CD8-positive, alpha-beta T cell (primary cell): ENCODE measurements at regions of chr6 and their contacts with region 1.

Region 1: GRCh38 chr6:142155895-142156757 is 9.1 kb downstream of the VTA1 start:
- DNase-seq: peak in 2 of 9 experiments; percentile 19 to 44
- ATAC-seq: peak; percentile 76
- H3K4me3 ChIP-seq: no peak overlapping the region
- H3K4me3 Mint-ChIP-seq: no peak overlapping the region
- H3K27ac ChIP-seq: no peak overlapping the region
- H3K27ac Mint-ChIP-seq: peak overlapping the region; percentile 39
- H3K4me1 ChIP-seq: peaks cover 8% of the 10 kb centered on the region
- H3K4me1 Mint-ChIP-seq: peaks cover 69% of the 10 kb centered on the region
- H3K27me3 ChIP-seq: no peaks in the 10 kb centered on the region
- H3K27me3 Mint-ChIP-seq: no peaks in the 10 kb centered on the region
- CTCF ChIP-seq: peak; percentile 83

Region 2: DNA sequence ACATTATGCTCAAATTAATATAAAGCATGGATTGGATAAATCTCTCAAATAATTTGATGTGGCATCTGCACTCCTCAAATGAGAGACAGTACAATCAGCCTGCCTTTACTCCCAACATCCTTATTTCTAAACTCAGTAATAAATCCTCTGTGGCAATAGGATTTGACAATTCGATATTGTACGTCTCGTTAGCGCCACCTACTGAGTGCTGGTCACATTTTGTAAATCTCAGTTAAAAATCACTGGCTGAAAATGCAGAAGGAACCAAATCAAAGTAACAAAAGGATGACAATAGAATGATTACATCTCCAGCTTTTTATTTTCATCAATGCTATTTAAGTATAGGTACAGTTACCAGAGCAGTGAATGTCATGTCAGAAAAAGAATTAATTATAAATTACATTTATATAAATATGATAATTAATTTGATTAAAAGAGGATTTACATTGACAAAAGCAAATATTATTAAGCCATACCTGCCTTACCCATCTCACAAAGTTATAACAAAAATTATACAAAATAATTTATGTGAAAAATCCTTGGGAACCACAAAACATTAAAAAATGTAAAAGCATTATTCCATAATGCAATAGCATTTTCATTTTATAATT is 43.6 kb before region 1 on chr6:
- CTCF ChIA-PET with region 1: no interaction called
- POLR2A ChIA-PET with region 1: no interaction called
- intact Hi-C with region 1: no loop called
- DNase-seq: peak; percentile 19 to 79 (median 68)
- ATAC-seq: peak; percentile 44
- H3K4me3 ChIP-seq: no peak overlapping the region
- H3K4me3 Mint-ChIP-seq: no peak overlapping the region
- H3K27ac ChIP-seq: no peak overlapping the region
- H3K27ac Mint-ChIP-seq: no peak overlapping the region
- H3K4me1 ChIP-seq: no peaks in the 10 kb centered on the region
- H3K4me1 Mint-ChIP-seq: no peaks in the 10 kb centered on the region
- H3K27me3 ChIP-seq: no peaks in the 10 kb centered on the region
- H3K27me3 Mint-ChIP-seq: peaks cover 9% of the 10 kb centered on the region
- CTCF ChIP-seq: peak; percentile 85

Region 3: DNA sequence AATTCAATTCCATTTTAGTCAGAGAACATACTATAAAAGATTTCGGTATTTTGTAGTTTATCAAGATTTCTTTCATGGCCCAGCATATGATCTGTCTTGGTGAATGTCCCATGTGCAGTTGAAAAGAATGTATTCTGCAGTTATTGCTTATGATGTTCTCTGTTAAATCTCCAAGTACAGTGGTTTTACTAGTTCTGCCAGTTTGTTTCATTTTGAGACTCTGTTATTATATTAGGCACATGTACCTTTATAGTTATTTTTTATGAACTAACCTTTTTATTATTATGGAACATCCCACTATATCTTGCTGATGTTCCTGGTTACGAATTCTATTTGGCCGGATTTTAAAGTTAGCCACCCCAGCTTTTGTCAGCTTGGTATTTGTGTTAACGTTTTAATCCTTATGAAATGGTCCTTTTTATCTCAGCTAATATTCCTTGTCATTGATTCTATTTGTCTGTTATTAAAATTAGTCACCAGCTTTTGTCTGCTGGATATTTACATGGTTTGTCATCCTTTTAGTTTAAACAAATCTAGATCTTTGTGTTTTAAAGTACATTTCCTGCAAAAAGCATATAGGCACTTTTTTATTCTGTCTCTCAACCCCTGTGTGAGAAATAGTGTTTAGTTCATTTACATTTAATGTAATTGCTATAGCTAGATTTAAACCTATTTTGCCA is 39.9 kb after region 1 on chr6:
- CTCF ChIA-PET with region 1: interaction called, 13 read pairs
- POLR2A ChIA-PET with region 1: no interaction called
- intact Hi-C with region 1: no loop called
- DNase-seq: no peak
- ATAC-seq: no peak
- H3K4me3 ChIP-seq: no peak overlapping the region
- H3K4me3 Mint-ChIP-seq: no peak overlapping the region
- H3K27ac ChIP-seq: no peak overlapping the region
- H3K27ac Mint-ChIP-seq: peak overlapping the region; percentile 41
- H3K4me1 ChIP-seq: peaks cover 8% of the 10 kb centered on the region
- H3K4me1 Mint-ChIP-seq: peaks cover 52% of the 10 kb centered on the region
- H3K27me3 ChIP-seq: no peaks in the 10 kb centered on the region
- H3K27me3 Mint-ChIP-seq: no peaks in the 10 kb centered on the region
- CTCF ChIP-seq: no peak

Region 4: GRCh38 chr6:142361782-142362750 is 205.9 kb after region 1 on chr6:
- CTCF ChIA-PET with region 1: no interaction called
- POLR2A ChIA-PET with region 1: no interaction called
- intact Hi-C with region 1: no loop called
- DNase-seq: no peak
- ATAC-seq: no peak
- H3K4me3 ChIP-seq: no peak overlapping the region
- H3K4me3 Mint-ChIP-seq: no peak overlapping the region
- H3K27ac ChIP-seq: no peak overlapping the region
- H3K27ac Mint-ChIP-seq: no peak overlapping the region
- H3K4me1 ChIP-seq: no peaks in the 10 kb centered on the region
- H3K4me1 Mint-ChIP-seq: peaks cover 2% of the 10 kb centered on the region
- H3K27me3 ChIP-seq: no peaks in the 10 kb centered on the region
- H3K27me3 Mint-ChIP-seq: peaks cover 3% of the 10 kb centered on the region
- CTCF ChIP-seq: no peak

Region 5: DNA sequence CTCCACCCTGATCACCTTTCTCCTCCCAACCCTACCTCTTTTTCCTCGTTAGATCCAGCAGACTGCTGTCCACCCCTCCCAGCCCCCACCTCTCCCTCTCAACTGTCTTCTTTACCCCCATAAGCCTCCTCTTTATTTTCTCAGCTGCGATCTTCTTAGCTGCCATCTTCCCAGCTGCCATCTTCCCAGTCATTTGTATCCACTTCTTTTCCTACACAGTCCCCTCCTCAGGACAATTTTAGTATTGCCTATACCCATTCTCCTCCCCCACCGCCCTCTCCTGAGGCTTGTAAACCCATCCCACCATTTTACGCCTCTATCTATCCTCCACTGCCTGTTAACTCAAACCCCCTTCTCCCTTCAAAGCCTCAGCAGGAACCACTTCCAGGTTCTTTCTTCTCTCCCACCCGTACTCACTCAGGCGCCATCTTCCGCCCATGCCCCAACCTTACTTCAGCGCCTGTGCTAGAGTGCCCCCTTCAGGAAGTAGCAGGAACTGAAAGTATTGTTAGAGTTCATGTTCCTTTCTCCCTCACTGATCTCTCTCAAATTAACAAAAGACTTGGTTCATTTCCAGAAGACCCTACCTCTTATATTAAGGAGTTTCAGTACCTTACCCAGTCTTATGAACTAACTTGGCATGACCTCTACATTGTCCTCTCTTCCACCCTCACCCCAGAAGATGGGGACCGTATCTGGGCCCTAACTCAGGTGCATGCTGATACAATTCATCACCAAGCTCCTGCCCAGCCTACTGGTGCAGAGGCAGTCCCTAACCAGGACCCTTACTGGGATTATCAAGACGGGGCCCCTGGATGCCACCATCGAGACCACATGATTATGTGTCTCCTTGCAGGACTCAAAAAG is 381.7 kb after region 1 on chr6:
- CTCF ChIA-PET with region 1: no interaction called
- POLR2A ChIA-PET with region 1: no interaction called
- intact Hi-C with region 1: loop called in 1 of 2 experiments (anchors 5 kb)
- DNase-seq: peak in 2 of 9 experiments; percentile 10 to 16
- ATAC-seq: no peak
- H3K4me3 ChIP-seq: no peak overlapping the region
- H3K4me3 Mint-ChIP-seq: no peak overlapping the region
- H3K27ac ChIP-seq: no peak overlapping the region
- H3K27ac Mint-ChIP-seq: no peak overlapping the region
- H3K4me1 ChIP-seq: no peaks in the 10 kb centered on the region
- H3K4me1 Mint-ChIP-seq: no peaks in the 10 kb centered on the region
- H3K27me3 ChIP-seq: peaks cover 0 to 3% of the 10 kb centered on the region in 2 experiments
- H3K27me3 Mint-ChIP-seq: no peaks in the 10 kb centered on the region
- CTCF ChIP-seq: no peak